ENCODE measurements at regions of chr4 and their contacts with region 1.

Region 1: GRCh38 chr4:125741825-125742452 is 427.2 kb downstream of the FAT4 start:
- DNase-seq: no peak

Region 2: DNA sequence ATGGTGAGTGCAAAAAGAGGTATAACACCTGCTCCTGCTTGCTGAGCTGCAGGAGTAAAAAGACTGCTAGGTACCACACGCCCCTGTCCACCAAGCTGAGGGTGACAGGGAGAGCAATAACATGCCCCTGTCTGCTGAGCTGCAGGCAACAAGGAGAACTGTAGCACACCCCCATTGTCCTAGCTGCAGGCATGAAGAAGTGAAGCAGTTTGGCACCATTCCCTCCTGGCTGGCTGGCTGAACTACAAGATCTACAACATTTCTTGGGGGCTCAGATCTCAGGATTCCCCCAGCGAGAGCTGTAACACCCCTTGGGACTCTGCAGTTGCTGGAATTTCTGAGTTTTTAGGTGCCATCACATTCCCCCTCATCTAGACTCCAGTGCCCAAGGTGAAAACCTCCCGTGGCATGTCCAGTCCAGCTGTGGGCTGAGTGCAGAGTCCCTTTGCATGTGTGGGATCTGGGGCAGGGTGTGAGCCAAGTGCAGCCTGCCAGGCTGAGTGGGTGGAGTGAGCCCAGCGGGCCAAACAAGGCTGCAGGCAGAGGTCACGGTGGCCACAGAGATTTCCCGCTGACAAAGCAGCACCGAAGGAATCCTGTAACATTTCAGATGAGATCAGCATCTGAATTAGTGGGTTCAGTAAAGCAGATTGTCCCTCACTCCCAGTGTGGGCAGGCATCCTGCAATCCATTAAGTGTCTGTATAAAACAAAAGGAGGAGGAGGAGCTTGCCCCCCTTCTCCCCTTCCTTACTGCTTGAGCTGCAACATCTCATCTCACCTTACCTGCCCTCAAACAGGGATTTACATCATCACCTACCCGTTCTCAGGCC is 102.9 kb before region 1 on chr4:
- intact Hi-C with region 1: loop called (anchors 5 kb)
- DNase-seq: no peak

Region 3: DNA sequence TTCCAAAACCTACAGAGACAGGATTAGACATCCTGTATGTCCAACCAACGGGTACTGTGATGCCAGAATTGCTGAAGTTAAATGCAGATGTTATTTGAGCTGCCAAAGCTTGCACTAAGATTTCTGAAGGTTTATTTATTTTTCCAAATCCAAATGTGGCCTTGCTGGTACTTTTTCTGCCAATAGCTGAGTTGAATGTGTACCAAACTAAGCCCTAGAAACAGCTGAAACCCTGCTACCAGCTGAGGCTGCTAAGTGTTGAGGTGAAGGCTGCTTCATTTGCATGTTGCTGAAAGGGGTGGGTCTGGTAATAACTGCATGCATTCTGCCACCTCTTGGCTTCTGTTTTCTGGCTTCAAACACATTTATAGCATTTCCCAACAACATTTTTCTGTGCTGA is 60.7 kb before region 1 on chr4:
- intact Hi-C with region 1: no loop called
- DNase-seq: no peak

Region 4: GRCh38 chr4:126213996-126214395 is 472.1 kb after region 1 on chr4:
- intact Hi-C with region 1: no loop called
- DNase-seq: no peak